ENCODE measurements at regions of chr1 and their contacts with region 1.

Region 1: GRCh38 chr1:170067253-170067819 is 7.2 kb downstream of the KIFAP3 start:
- DNase-seq: no peak
- H3K4me3 ChIP-seq: no peak overlapping the region
- H3K27ac ChIP-seq: no peak overlapping the region
- H3K4me1 ChIP-seq: peaks cover 20% of the 10 kb centered on the region
- H3K27me3 ChIP-seq: no peaks in the 10 kb centered on the region
- CTCF ChIP-seq: no peak

Region 2: GRCh38 chr1:170340343-170340707 is 273.0 kb after region 1 on chr1:
- CTCF ChIA-PET with region 1: no interaction called
- POLR2A ChIA-PET with region 1: interaction called, 10 read pairs
- intact Hi-C with region 1: no loop called
- DNase-seq: no peak
- H3K4me3 ChIP-seq: no peak overlapping the region
- H3K27ac ChIP-seq: no peak overlapping the region
- H3K4me1 ChIP-seq: no peaks in the 10 kb centered on the region
- H3K27me3 ChIP-seq: no peaks in the 10 kb centered on the region
- CTCF ChIP-seq: no peak

Region 3: GRCh38 chr1:170680428-170680827 is 613.1 kb after region 1 on chr1:
- CTCF ChIA-PET with region 1: no interaction called
- POLR2A ChIA-PET with region 1: no interaction called
- intact Hi-C with region 1: no loop called
- DNase-seq: no peak
- H3K4me3 ChIP-seq: no peak overlapping the region
- H3K27ac ChIP-seq: no peak overlapping the region
- H3K4me1 ChIP-seq: no peaks in the 10 kb centered on the region
- H3K27me3 ChIP-seq: no peaks in the 10 kb centered on the region
- CTCF ChIP-seq: no peak

Measured in PC-9 (cell line).